Activated CD8-positive, alpha-beta T cell treated with anti-CD3 and anti-CD28 coated beads, Interleukin-2, amount 10 ng/mL, durations not matched to agents 7 days and 5 days (primary cell): ENCODE measurements at regions of chr17 and their contacts with region 1.

Region 1: GRCh38 chr17:7045909-7046724 is 2.2 kb upstream of the SLC16A11 start:
- DNase-seq: peak; percentile 68
- ATAC-seq: peak; percentile 43
- H3K4me3 Mint-ChIP-seq: peak overlapping the region; percentile 73
- H3K27ac Mint-ChIP-seq: peak overlapping the region; percentile 66
- H3K4me1 Mint-ChIP-seq: peaks cover 37% of the 10 kb centered on the region
- H3K27me3 Mint-ChIP-seq: peaks cover 10% of the 10 kb centered on the region

Region 2: GRCh38 chr17:6913608-6914443 is 132.3 kb before region 1 on chr17:
- CTCF ChIA-PET with region 1: interaction called, 12 read pairs
- POLR2A ChIA-PET with region 1: no interaction called
- DNase-seq: peak; percentile 87
- ATAC-seq: peak; percentile 83
- H3K4me3 Mint-ChIP-seq: peak overlapping the region; percentile 71
- H3K27ac Mint-ChIP-seq: no peak overlapping the region
- H3K4me1 Mint-ChIP-seq: peaks cover 14% of the 10 kb centered on the region
- H3K27me3 Mint-ChIP-seq: peaks cover 26% of the 10 kb centered on the region

Region 3: DNA sequence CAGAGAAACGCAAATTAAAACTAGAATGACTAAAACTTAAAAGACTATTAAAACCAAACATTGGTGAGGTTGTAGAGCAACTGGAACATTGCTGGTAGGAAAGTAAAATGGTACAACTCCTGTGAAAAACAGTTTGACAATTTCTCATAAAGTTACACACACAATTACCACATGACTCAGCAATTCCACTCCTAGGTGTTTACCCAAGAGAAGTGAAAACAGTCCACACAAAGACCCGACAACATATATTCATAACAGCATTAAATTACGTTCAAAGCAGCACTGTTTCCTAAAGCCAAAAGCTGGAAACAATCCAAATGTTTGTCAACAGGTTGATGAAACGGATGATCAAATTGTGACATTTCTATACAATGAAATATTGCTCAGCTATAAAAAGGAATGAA is 76.8 kb before region 1 on chr17:
- CTCF ChIA-PET with region 1: no interaction called
- POLR2A ChIA-PET with region 1: no interaction called
- DNase-seq: no peak
- ATAC-seq: no peak
- H3K4me3 Mint-ChIP-seq: no peak overlapping the region
- H3K27ac Mint-ChIP-seq: no peak overlapping the region
- H3K4me1 Mint-ChIP-seq: peaks cover 3% of the 10 kb centered on the region
- H3K27me3 Mint-ChIP-seq: peaks cover 6% of the 10 kb centered on the region

Region 4: DNA sequence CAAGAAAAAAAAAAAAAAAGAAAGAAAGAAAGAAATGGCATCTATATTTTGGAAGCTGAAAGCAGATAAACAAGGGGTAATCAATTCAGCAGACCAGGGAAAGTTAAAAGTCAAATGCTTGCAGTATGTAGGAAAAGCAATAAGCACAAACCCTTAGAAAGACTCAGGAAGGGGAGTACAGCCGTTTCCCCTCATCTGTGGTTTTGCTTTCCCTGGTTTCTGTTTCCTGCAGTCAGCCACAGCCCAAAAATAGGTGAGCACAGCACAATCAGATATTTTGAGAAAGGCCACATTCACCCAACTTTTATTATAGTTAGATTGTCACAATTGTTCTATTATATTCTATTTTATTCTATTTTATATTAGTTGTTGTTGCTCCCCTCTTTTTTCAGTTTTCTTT is 64.7 kb before region 1 on chr17:
- CTCF ChIA-PET with region 1: no interaction called
- POLR2A ChIA-PET with region 1: no interaction called
- DNase-seq: peak; percentile 27
- ATAC-seq: no peak
- H3K4me3 Mint-ChIP-seq: peak overlapping the region; percentile 18
- H3K27ac Mint-ChIP-seq: no peak overlapping the region
- H3K4me1 Mint-ChIP-seq: peaks cover 26% of the 10 kb centered on the region
- H3K27me3 Mint-ChIP-seq: no peaks in the 10 kb centered on the region

Region 5: GRCh38 chr17:7035591-7036368 is 10.3 kb before region 1 on chr17 and contains the start of gene SLC16A13:
- CTCF ChIA-PET with region 1: interaction called, 37 read pairs
- POLR2A ChIA-PET with region 1: interaction called, 24 read pairs
- DNase-seq: peak; percentile 100
- ATAC-seq: peak; percentile 93
- H3K4me3 Mint-ChIP-seq: peak within 1 kb of the TSS; percentile 95
- H3K27ac Mint-ChIP-seq: peak within 1 kb of the TSS; percentile 98
- H3K4me1 Mint-ChIP-seq: peaks cover 62% of the 10 kb centered on the region
- H3K27me3 Mint-ChIP-seq: no peaks in the 10 kb centered on the region
- total RNA-seq, gene SLC16A13: 14.8 to 15.0 TPM

Region 6: DNA sequence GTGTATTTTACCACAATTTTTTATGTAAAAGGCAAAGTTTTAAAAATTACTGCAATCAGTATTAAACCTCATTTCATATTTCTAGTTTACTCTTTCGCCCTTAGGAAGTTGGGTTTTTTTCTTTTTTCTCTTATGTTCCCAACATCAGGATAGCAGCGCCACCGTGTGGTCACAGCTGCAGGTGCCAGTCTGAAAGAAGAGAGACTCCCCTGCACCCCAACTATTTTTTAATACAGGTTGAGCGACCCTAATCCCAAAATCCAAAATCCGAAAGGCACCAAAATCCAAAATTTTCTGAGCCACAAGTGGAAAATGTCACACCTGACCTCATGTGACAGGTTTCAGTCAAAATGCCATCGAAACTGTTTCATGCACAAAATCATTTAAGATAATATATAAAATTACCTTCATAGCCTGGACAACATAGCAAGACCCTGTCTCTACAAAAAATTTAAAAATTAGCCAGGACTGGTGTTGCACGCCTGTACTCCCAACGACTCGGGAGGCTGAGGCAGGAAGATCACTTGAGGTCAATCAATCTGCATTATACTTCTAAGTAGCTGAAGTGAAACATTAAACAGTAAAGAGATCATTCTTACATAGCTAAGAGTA is 90.3 kb after region 1 on chr17:
- CTCF ChIA-PET with region 1: interaction called, 395 read pairs
- POLR2A ChIA-PET with region 1: interaction called, 16 read pairs
- DNase-seq: peak; percentile 84
- ATAC-seq: no peak
- H3K4me3 Mint-ChIP-seq: no peak overlapping the region
- H3K27ac Mint-ChIP-seq: no peak overlapping the region
- H3K4me1 Mint-ChIP-seq: peaks cover 10% of the 10 kb centered on the region
- H3K27me3 Mint-ChIP-seq: peaks cover 4% of the 10 kb centered on the region

Region 7: DNA sequence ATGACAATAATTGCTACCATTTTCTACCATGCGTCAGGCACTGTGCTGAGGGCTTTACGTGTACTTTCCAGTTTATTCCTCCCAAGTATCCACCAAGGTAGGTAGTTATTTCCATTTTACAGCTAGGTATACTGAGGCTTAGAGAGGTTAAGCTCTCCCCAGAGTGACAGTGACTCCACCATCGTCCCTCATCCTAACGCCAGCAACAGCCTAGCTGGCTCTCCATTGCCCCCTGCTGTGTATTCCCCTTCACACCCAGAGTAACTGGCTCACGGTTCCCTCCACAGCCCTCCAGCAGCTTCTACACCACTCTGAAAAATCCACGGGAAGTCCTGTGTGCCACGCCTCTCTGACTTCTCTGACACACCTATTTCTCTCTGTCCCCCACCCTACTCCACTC is 140.1 kb after region 1 on chr17:
- CTCF ChIA-PET with region 1: interaction called, 17 read pairs
- POLR2A ChIA-PET with region 1: no interaction called
- DNase-seq: peak; percentile 36
- ATAC-seq: peak; percentile 34
- H3K4me3 Mint-ChIP-seq: no peak overlapping the region
- H3K27ac Mint-ChIP-seq: no peak overlapping the region
- H3K4me1 Mint-ChIP-seq: no peaks in the 10 kb centered on the region
- H3K27me3 Mint-ChIP-seq: no peaks in the 10 kb centered on the region

Region 8: DNA sequence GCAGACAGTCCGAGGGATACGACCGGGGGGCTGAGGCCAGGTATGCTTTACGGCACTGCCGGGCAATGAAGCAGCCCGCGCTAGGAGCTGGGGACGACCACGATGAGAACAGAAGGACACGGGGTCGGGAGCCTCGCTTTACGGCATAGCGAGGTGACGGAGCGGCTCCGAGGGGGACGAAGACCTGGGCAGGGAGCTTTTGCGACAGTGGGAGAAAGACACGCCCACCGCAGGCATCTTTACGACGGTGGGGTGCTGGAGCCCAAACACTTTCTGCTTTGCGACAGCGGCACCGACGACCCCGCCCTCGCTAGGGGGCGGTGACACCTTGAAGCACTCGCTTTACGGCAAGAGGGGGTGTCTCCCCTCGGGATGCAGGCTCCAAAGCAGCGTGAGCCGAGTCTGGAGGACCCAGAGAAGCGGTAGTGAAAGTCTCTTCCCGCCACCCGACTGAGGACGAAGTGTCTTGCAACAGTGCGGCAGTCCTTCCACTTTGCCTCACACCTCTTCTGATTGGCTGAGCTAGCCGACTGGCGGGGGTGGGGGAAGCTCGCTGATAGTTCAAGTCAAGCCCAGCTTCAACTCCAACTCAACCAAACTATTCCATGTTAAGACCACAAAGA is 283.4 kb after region 1 on chr17:
- CTCF ChIA-PET with region 1: interaction called, 12 read pairs
- POLR2A ChIA-PET with region 1: no interaction called
- DNase-seq: peak; percentile 98
- ATAC-seq: peak; percentile 63
- H3K4me3 Mint-ChIP-seq: peak overlapping the region; percentile 87
- H3K27ac Mint-ChIP-seq: peak overlapping the region; percentile 98
- H3K4me1 Mint-ChIP-seq: peaks cover 54% of the 10 kb centered on the region
- H3K27me3 Mint-ChIP-seq: no peaks in the 10 kb centered on the region